ENCODE measurements at regions of chr22 and their contacts with region 1.

Region 1: DNA sequence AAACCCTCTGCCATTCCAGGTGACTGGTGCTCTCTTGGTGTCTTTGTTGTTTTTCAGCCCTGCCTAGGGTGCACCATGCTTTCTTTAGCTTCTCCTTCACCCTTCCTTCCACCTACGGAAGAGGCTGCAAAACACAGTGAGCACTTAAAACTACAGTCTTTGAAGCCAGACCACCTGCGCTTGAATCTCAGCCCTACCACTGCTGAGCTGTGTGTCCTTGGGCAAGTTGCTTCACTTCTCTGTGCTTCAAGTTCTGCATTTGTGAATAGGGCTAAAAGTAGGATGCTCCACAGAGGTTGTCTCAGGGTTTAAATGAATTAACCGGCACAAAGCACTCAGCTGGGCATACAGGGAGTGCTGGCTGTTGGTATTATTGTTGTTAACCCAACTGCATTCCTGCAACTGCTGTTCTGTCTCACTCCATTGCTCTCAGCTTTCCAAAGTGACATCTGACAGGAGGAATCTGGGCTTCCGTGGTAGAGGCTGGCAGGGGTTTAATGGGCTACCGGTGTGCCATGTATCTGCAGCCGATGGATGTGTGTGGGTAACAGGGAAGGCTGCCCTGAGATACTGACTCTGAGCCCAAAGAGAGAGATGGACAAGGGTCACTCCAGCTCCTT is 139.3 kb downstream of the FBXO7 start:
- DNase-seq: no peak
- H3K4me3 ChIP-seq: no peak overlapping the region
- H3K27ac ChIP-seq: no peak overlapping the region
- H3K4me1 ChIP-seq: no peaks in the 10 kb centered on the region; a peak in 1 of 7 replicates
- H3K27me3 ChIP-seq: no peaks in the 10 kb centered on the region; a peak in 1 of 7 replicates
- CTCF ChIP-seq: no peak
- EP300 ChIP-seq: no peak
- POLR2A ChIP-seq: no peak
- RAD21 ChIP-seq: no peak

Region 2: GRCh38 chr22:32628628-32629572 is 15.0 kb after region 1 on chr22:
- CTCF ChIA-PET with region 1: interaction called, 11 read pairs
- POLR2A ChIA-PET with region 1: interaction called, 3 read pairs
- DNase-seq: no peak
- H3K4me3 ChIP-seq: no peak overlapping the region
- H3K27ac ChIP-seq: no peak overlapping the region
- H3K4me1 ChIP-seq: peaks cover 0 to 2% (median 0%) of the 10 kb centered on the region in 4 experiments; a peak in 1 of 7 replicates
- H3K27me3 ChIP-seq: peaks cover 0 to 6% (median 1%) of the 10 kb centered on the region in 4 experiments; a peak in 2 of 7 replicates
- CTCF ChIP-seq: no peak
- EP300 ChIP-seq: no peak
- POLR2A ChIP-seq: no peak
- RAD21 ChIP-seq: no peak

Region 3: GRCh38 chr22:32650553-32651345 is 36.9 kb after region 1 on chr22:
- CTCF ChIA-PET with region 1: no interaction called
- POLR2A ChIA-PET with region 1: no interaction called
- DNase-seq: no peak
- H3K4me3 ChIP-seq: no peak overlapping the region
- H3K27ac ChIP-seq: no peak overlapping the region
- H3K4me1 ChIP-seq: no peaks in the 10 kb centered on the region
- H3K27me3 ChIP-seq: peaks cover 0 to 3% (median 0%) of the 10 kb centered on the region in 4 experiments; a peak in 1 of 7 replicates
- CTCF ChIP-seq: no peak
- EP300 ChIP-seq: no peak
- POLR2A ChIP-seq: no peak
- RAD21 ChIP-seq: no peak

Measured in H1 (cell line).